ENCODE measurements at regions of chr17 and their contacts with region 1.

Region 1: GRCh38 chr17:54900457-54901229 is at the start of gene TOM1L1:
- DNase-seq: peak; percentile 87 to 90
- H3K4me3 ChIP-seq: peak within 1 kb of the TSS; percentile 96
- H3K4me3 Mint-ChIP-seq: peak within 1 kb of the TSS; percentile 85
- H3K27ac Mint-ChIP-seq: peak within 1 kb of the TSS; percentile 55
- H3K4me1 ChIP-seq: no peaks in the 10 kb centered on the region
- H3K4me1 Mint-ChIP-seq: no peaks in the 10 kb centered on the region
- H3K27me3 ChIP-seq: no peaks in the 10 kb centered on the region
- H3K27me3 Mint-ChIP-seq: peaks cover 8% of the 10 kb centered on the region
- CTCF ChIP-seq: peak; percentile 29 to 37
- total RNA-seq, gene TOM1L1: 48.7 TPM in 2 replicates

Region 2: DNA sequence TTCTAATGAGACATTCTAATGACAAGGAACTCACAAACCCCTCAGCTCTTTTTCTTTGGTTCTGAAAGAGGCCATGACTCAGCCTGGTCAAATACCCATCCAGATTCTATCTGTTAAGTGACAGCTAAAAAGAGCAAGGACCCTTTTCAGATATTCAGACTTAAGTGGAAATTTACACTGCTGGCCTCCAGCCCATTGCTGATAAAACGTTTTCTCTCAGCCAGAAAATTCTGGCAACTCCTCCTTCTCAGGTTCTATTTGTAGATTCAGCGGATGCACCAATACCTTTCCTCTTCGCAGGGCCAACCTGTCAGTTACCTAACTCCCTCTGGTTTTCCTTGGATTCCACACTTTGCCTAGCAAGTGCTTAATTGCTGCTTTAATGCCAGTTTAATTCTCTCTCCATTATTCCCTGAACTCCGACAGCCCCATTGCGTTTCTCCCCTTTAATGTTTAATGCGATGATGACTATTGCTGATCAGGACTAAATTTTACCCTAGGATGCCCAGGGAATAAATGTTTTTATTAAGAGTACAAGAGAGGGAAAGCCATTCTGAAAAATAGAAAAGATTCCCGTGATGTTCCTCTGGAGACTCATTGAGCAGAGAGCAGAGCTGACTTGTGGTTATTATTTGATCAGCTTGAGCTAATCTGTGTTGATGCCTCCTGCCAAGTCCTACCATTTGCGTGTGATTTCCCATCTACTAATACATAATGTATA is 35.8 kb before region 1 on chr17:
- CTCF ChIA-PET with region 1: no interaction called
- POLR2A ChIA-PET with region 1: no interaction called
- intact Hi-C with region 1: no loop called
- DNase-seq: no peak
- H3K4me3 ChIP-seq: no peak overlapping the region
- H3K4me3 Mint-ChIP-seq: no peak overlapping the region
- H3K27ac Mint-ChIP-seq: no peak overlapping the region
- H3K4me1 ChIP-seq: 0 out of 2 replicates have a peak, but pooled peaks cover 6% of the 10 kb centered on the region
- H3K4me1 Mint-ChIP-seq: peaks cover 7% of the 10 kb centered on the region
- H3K27me3 ChIP-seq: no peaks in the 10 kb centered on the region
- H3K27me3 Mint-ChIP-seq: peaks cover 5% of the 10 kb centered on the region
- CTCF ChIP-seq: no peak

Region 3: DNA sequence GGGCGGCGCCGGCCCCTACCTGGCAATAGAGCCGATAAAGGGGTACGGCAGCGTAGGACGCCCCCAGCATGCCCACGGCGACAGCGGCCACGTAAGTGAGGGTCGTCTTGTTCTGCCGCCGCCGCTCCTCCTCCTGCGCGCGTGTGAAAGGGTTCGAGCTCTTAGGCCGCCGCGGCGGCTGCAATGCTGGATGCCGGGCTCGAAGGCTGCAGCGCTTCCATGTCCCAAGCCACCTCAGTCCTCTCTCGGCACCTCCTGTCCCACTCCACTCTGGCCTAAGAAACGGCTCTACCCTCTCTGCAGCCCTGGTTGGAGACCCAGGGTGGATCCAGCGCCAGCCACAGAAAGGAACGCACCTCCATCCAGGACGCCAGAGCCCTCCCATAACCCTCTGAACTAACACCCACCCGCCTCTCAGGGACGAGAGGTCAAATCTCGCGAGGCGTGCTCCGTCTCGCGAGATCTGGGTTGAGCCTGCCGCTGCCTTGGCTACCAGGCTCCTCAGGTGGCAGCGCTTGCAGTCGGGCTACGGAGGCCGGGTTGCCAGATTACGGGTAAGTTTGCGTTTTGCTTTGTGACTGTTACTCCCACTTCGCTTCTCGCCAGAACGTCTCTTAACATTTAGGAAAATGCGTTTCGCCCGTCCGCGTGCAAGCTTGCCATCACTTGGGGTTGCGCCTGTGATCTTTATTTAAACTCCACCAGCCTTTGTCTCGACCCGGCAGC is 67.8 kb after region 1 on chr17 and contains the starts of genes COX11 and STXBP4:
- CTCF ChIA-PET with region 1: interaction called, 4 read pairs
- POLR2A ChIA-PET with region 1: interaction called, 3 read pairs
- intact Hi-C with region 1: loop called (anchors 2 kb)
- DNase-seq: peak; percentile 96
- H3K4me3 ChIP-seq: peak within 1 kb of the TSS; percentile 62
- H3K4me3 Mint-ChIP-seq: no peak within 1 kb of the TSS
- H3K27ac Mint-ChIP-seq: no peak within 1 kb of the TSS
- H3K4me1 ChIP-seq: peaks cover 23% of the 10 kb centered on the region
- H3K4me1 Mint-ChIP-seq: no peaks in the 10 kb centered on the region
- H3K27me3 ChIP-seq: no peaks in the 10 kb centered on the region
- H3K27me3 Mint-ChIP-seq: no peaks in the 10 kb centered on the region
- CTCF ChIP-seq: no peak
- total RNA-seq, gene COX11: 75.9 and 77.6 TPM in 2 replicates
- total RNA-seq, gene STXBP4: 16.1 and 16.8 TPM in 2 replicates

Region 4: GRCh38 chr17:55303701-55304145 is 403.1 kb after region 1 on chr17:
- CTCF ChIA-PET with region 1: no interaction called
- POLR2A ChIA-PET with region 1: no interaction called
- intact Hi-C with region 1: no loop called
- DNase-seq: no peak
- H3K4me3 ChIP-seq: no peak overlapping the region
- H3K4me3 Mint-ChIP-seq: no peak overlapping the region
- H3K27ac Mint-ChIP-seq: no peak overlapping the region
- H3K4me1 ChIP-seq: peaks cover 8% of the 10 kb centered on the region; the same call in 1 of the 2 replicates
- H3K4me1 Mint-ChIP-seq: peaks cover 16% of the 10 kb centered on the region
- H3K27me3 ChIP-seq: no peaks in the 10 kb centered on the region
- H3K27me3 Mint-ChIP-seq: no peaks in the 10 kb centered on the region
- CTCF ChIP-seq: no peak

Measured in Caco-2 (cell line).